Mucosa of descending colon (tissue), 3 donors: ENCODE measurements at regions of chr10 and their contacts with region 1.

Region 1: GRCh38 chr10:49407552-49408137 is 11.8 kb upstream of the DRGX start:
- DNase-seq: peak in 2 of 3 donors; percentile 87 to 94
- ATAC-seq: peak; percentile 89
- H3K4me3 ChIP-seq: no peak overlapping the region
- H3K4me1 ChIP-seq: no peaks in the 10 kb centered on the region
- CTCF ChIP-seq: peak; percentile 74

Region 2: GRCh38 chr10:49508249-49508648 is 100.6 kb after region 1 on chr10:
- intact Hi-C with region 1: loop called (anchors 5 to 10 kb)
- DNase-seq: no peak
- ATAC-seq: no peak
- H3K4me3 ChIP-seq: no peak overlapping the region
- H3K4me1 ChIP-seq: no peaks in the 10 kb centered on the region
- CTCF ChIP-seq: no peak

Region 3: GRCh38 chr10:49518982-49519578 is 111.4 kb after region 1 on chr10:
- intact Hi-C with region 1: loop called in 1 of 2 experiments (anchors 10 kb)
- DNase-seq: peak in 1 of 3 donors; percentile 37
- ATAC-seq: peak; percentile 76
- H3K4me3 ChIP-seq: no peak overlapping the region
- H3K4me1 ChIP-seq: no peaks in the 10 kb centered on the region
- CTCF ChIP-seq: peak; percentile 28

Region 4: GRCh38 chr10:49549640-49550346 is 142.1 kb after region 1 on chr10:
- intact Hi-C with region 1: no loop called
- DNase-seq: no peak
- ATAC-seq: no peak
- H3K4me3 ChIP-seq: no peak overlapping the region
- H3K4me1 ChIP-seq: no peaks in the 10 kb centered on the region
- CTCF ChIP-seq: no peak